ENCODE measurements at regions of chr4 and their contacts with region 1.

Region 1: GRCh38 chr4:74228691-74229640 is 71.0 kb downstream of the MTHFD2L start:
- DNase-seq: peak; percentile 88
- ATAC-seq: peak; percentile 74
- H3K4me3 Mint-ChIP-seq: no peak overlapping the region
- H3K27ac Mint-ChIP-seq: no peak overlapping the region
- H3K4me1 Mint-ChIP-seq: peaks cover 4% of the 10 kb centered on the region
- H3K27me3 Mint-ChIP-seq: no peaks in the 10 kb centered on the region
- CTCF ChIP-seq: peak; percentile 84

Region 2: DNA sequence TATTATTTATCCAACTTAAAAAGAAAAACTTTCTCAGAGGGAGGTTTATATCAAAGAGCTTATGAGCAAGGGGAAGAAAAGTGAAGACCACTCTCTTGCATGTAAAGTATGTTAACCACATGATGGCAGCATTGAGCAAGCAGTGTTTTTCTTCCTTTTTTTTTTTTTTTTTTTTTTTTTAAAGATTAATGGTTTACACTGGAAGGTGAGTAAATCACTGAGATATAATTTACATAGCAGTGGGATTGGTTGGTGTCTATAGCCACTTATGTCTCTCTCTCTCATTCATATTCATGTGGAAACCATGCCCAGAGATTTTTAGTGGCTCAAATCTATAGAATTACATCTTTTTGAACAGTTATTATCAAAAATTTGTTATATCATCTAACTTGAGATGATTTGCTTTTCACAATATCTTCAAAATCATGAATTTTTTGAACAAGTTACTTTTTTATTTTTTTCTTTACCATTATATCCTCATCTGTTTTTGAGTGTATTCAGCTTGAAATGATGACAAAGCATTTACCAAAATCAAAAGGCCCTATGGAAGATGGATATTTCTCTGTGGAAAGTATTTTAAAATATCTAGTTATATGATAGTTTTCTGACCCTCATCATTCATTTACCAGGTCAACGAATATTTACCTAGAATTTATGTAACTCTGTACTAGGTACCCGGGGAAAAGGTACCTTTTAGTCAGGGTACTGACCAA is 39.5 kb before region 1 on chr4:
- CTCF ChIA-PET with region 1: interaction called, 20 read pairs
- POLR2A ChIA-PET with region 1: no interaction called
- intact Hi-C with region 1: no loop called
- DNase-seq: no peak
- ATAC-seq: peak; percentile 42
- H3K4me3 Mint-ChIP-seq: no peak overlapping the region
- H3K27ac Mint-ChIP-seq: no peak overlapping the region
- H3K4me1 Mint-ChIP-seq: no peaks in the 10 kb centered on the region
- H3K27me3 Mint-ChIP-seq: no peaks in the 10 kb centered on the region
- CTCF ChIP-seq: peak; percentile 73

Region 3: DNA sequence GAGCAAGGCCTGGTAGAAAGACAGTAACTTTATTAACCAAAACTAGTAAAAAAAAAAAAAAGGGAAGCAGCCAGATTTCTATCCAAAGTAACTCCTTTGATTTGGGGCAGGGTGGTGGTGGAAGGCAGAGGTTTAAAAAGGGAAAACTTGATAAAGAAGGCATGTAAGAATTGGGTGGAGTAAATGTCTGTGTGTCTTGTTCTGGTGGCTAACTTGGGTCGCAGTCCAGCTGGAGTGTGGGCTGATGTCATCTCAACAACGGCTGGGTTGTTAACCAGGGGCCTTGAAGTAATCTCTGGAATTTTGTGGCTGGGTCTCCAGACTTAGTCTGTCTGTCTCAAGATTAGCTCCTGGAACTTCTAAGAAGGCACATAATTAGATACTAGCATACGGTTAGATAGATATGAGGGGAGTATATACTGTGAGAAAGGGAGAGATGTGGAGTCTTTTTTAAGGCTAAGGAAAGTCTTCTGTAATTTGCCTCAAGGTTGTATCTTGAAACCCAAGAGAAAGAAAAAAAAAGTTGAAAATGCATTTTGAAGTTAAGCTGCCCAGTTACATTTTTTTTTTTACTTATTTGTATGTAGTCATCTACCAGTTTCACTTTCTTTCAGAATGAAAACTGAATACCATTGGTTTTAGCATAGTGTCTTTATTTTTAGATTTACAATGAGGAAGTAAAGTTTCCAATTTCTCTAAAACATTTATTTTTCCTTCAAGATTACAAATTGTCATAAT is 22.7 kb before region 1 on chr4:
- CTCF ChIA-PET with region 1: interaction called, 13 read pairs
- POLR2A ChIA-PET with region 1: interaction called, 3 read pairs
- intact Hi-C with region 1: no loop called
- DNase-seq: no peak
- ATAC-seq: no peak
- H3K4me3 Mint-ChIP-seq: no peak overlapping the region
- H3K27ac Mint-ChIP-seq: peak overlapping the region; percentile 40
- H3K4me1 Mint-ChIP-seq: peaks cover 7% of the 10 kb centered on the region
- H3K27me3 Mint-ChIP-seq: no peaks in the 10 kb centered on the region
- CTCF ChIP-seq: no peak

Region 4: DNA sequence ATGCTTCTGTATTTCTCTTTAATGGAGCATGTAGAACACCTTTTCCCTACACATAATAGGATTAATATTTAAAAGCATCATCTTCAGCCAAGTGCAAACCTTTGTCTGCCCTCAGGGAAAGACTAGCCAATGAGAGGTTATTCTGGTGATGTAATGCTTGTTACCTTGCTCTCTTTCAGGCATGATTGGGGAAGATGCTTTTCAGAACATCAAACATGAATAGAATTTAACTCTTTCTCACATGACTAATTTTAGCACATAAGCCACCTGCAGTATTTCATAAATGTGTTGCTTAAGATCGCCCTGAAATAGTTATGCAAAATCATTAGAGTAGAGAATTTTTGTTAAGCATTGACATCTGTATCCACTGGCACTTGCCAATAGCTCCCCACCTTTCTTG is 68.6 kb after region 1 on chr4:
- CTCF ChIA-PET with region 1: interaction called, 11 read pairs
- POLR2A ChIA-PET with region 1: no interaction called
- intact Hi-C with region 1: no loop called
- DNase-seq: no peak
- ATAC-seq: no peak
- H3K4me3 Mint-ChIP-seq: no peak overlapping the region
- H3K27ac Mint-ChIP-seq: no peak overlapping the region
- H3K4me1 Mint-ChIP-seq: no peaks in the 10 kb centered on the region
- H3K27me3 Mint-ChIP-seq: no peaks in the 10 kb centered on the region
- CTCF ChIP-seq: no peak

Region 5: GRCh38 chr4:74311696-74312313 is 82.8 kb after region 1 on chr4:
- CTCF ChIA-PET with region 1: interaction called, 12 read pairs
- POLR2A ChIA-PET with region 1: no interaction called
- intact Hi-C with region 1: loop called (anchors 1 kb)
- DNase-seq: peak; percentile 32
- ATAC-seq: no peak
- H3K4me3 Mint-ChIP-seq: no peak overlapping the region
- H3K27ac Mint-ChIP-seq: no peak overlapping the region
- H3K4me1 Mint-ChIP-seq: peaks cover 6% of the 10 kb centered on the region
- H3K27me3 Mint-ChIP-seq: no peaks in the 10 kb centered on the region
- CTCF ChIP-seq: peak; percentile 64

Region 6: GRCh38 chr4:74320559-74321118 is 91.7 kb after region 1 on chr4:
- CTCF ChIA-PET with region 1: interaction called, 11 read pairs
- POLR2A ChIA-PET with region 1: no interaction called
- intact Hi-C with region 1: no loop called
- DNase-seq: peak; percentile 50
- ATAC-seq: peak; percentile 94
- H3K4me3 Mint-ChIP-seq: no peak overlapping the region
- H3K27ac Mint-ChIP-seq: no peak overlapping the region
- H3K4me1 Mint-ChIP-seq: no peaks in the 10 kb centered on the region
- H3K27me3 Mint-ChIP-seq: peaks cover 15% of the 10 kb centered on the region
- CTCF ChIP-seq: peak; percentile 51

Region 7: GRCh38 chr4:74675673-74676279 is 446.8 kb after region 1 on chr4:
- CTCF ChIA-PET with region 1: interaction called, 5 read pairs
- POLR2A ChIA-PET with region 1: no interaction called
- intact Hi-C with region 1: loop called (anchors 10 kb)
- DNase-seq: peak; percentile 4
- ATAC-seq: no peak
- H3K4me3 Mint-ChIP-seq: no peak overlapping the region
- H3K27ac Mint-ChIP-seq: no peak overlapping the region
- H3K4me1 Mint-ChIP-seq: no peaks in the 10 kb centered on the region
- H3K27me3 Mint-ChIP-seq: peaks cover 8% of the 10 kb centered on the region
- CTCF ChIP-seq: peak; percentile 72